Activated T-helper 1 cell treated with anti-CD3 and anti-CD28 coated beads, Interleukin-12 subunit alpha, Interleukin-12 subunit beta, Interleukin-2, Interleukin-4 antibody, amounts not matched to agents 30 ng/mL and 10 ng/mL and 1 ng/mL, durations not matched to agents 14 hours and 24 hours and 36 hours (primary cell): ENCODE measurements at regions of chr3 and their contacts with region 1.

Region 1: DNA sequence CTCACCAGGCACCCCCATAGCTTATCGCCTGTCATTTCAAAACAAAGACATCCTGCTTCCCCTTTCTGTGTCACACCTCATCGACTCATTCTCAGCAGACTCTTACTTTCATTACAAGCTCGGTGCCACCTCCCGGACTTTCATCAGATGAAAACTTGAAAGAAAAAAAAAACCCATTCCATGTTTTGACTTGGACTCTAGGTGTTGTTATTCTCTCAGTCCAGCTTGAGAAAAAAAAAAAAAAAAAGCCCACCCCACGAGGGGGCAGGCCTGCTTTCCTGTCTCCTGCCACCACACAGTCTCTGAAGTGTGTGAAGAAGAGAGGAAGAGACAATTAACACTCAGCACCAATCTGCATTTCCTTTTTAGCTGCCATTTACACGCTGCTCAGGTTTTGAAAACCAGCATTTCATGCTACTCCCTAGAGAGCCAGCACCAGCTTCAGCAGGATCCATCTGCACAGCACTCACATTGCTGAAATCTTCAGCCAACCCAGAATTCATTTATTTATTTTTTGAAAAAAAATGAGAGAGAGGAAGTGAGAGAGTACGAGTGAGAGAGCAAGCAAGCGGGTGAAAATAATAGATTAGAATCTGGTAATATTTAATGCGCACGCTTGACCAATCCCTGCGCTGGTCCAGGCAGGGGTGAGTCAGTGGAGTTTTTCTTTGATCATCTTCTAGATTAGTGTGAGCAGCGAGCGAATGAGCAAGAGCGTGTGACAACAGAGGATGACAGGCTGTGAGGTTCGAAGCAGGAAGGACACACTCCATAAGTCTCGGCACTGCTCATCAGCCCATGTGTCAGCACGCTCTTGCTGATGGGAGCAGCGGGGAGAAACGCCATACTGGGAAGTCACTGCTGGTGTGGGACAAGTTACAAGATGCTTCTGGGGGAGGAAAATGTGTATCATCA is 23.5 kb downstream of the ZNF80 start:
- DNase-seq: peak; percentile 57
- H3K4me3 Mint-ChIP-seq: no peak overlapping the region
- H3K27ac Mint-ChIP-seq: no peak overlapping the region
- H3K4me1 Mint-ChIP-seq: no peaks in the 10 kb centered on the region
- H3K27me3 Mint-ChIP-seq: no peaks in the 10 kb centered on the region

Region 2: GRCh38 chr3:114242947-114243346 is 29.1 kb after region 1 on chr3:
- intact Hi-C with region 1: loop called (anchors 1 kb)
- DNase-seq: peak; percentile 24
- H3K4me3 Mint-ChIP-seq: no peak overlapping the region
- H3K27ac Mint-ChIP-seq: peak overlapping the region; percentile 45
- H3K4me1 Mint-ChIP-seq: peaks cover 23% of the 10 kb centered on the region
- H3K27me3 Mint-ChIP-seq: peaks cover 4% of the 10 kb centered on the region

Region 3: GRCh38 chr3:114290911-114291901 is 77.3 kb after region 1 on chr3:
- intact Hi-C with region 1: loop called (anchors 1 kb)
- DNase-seq: peak; percentile 57
- H3K4me3 Mint-ChIP-seq: no peak overlapping the region
- H3K27ac Mint-ChIP-seq: peak overlapping the region; percentile 68
- H3K4me1 Mint-ChIP-seq: peaks cover 18% of the 10 kb centered on the region
- H3K27me3 Mint-ChIP-seq: no peaks in the 10 kb centered on the region

Region 4: DNA sequence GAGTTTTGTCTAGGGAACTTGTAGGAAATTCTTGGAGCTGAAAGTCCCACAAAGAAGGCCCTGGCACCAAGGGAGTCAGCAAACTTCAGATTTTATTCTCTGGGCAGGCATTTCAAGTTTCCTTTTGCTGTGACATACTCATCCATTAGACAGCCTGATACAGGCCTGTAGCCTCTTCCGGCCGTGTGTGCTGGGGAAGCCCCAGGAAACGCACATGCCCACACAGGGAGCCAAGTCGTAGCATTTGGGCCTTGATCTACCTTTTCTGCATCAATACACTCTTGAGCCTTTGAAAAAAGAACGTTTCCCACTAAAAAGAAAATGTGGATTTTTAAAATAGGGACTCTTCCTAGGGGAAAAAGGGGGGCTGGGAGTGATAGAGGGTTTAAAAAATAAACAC is 94.9 kb after region 1 on chr3:
- intact Hi-C with region 1: loop called (anchors 5 kb)
- DNase-seq: peak; percentile 40
- H3K4me3 Mint-ChIP-seq: peak overlapping the region; percentile 13
- H3K27ac Mint-ChIP-seq: peak overlapping the region; percentile 86
- H3K4me1 Mint-ChIP-seq: peaks cover 37% of the 10 kb centered on the region
- H3K27me3 Mint-ChIP-seq: no peaks in the 10 kb centered on the region

Region 5: GRCh38 chr3:114332342-114333179 is 118.7 kb after region 1 on chr3:
- intact Hi-C with region 1: loop called (anchors 1 kb)
- DNase-seq: no peak
- H3K4me3 Mint-ChIP-seq: peak overlapping the region; percentile 20
- H3K27ac Mint-ChIP-seq: peak overlapping the region; percentile 86
- H3K4me1 Mint-ChIP-seq: peaks cover 51% of the 10 kb centered on the region
- H3K27me3 Mint-ChIP-seq: peaks cover 3% of the 10 kb centered on the region

Region 6: GRCh38 chr3:114632757-114633424 is 419.0 kb after region 1 on chr3:
- intact Hi-C with region 1: loop called (anchors 10 kb)
- DNase-seq: no peak
- H3K4me3 Mint-ChIP-seq: no peak overlapping the region
- H3K27ac Mint-ChIP-seq: peak overlapping the region; percentile 60
- H3K4me1 Mint-ChIP-seq: no peaks in the 10 kb centered on the region
- H3K27me3 Mint-ChIP-seq: no peaks in the 10 kb centered on the region